Motor neuron (in vitro differentiated cells): ENCODE measurements at regions of chrX and their contacts with region 1.

Region 1: DNA sequence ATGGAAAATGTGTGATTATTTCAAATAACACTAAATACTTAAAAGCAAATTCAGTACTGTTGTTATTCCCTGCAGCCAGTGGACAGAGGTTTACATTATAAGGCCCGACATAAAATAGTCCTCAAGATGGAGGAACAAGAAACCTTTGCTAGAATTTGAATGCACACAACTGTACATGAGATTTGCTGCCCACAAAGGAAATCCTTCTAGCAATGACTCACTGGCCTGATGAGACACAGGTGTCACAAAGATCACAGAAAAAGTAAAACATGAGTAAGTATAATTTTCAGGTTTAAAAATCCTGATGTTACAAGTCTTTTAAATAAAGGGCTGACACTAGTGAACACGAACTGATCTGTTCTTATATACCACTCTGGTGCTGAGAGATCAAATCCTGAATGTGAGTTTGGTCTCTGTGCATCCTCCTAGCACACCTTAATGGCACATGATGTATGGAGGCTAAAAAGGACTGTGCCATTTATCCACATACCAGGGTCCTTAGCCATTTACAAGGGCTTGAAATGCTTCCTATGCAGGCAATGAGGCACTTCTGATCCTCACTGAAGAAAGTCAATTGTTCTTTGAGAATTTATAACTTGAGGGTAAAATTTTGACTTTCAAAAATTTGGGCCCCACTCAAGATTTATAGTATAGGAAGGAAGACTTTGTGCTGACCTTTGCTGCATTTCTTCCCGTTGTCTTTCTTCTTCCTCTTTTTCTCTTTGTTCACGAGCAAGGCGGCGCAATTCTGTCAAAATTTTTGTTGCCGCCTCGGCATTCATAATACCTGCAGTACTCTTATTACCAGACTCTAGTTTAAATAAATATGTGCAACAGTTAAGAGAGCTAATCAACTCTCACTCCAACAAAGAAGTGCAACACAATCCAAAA is 23.0 kb downstream of the MAP7D3 start:
- ATAC-seq: no peak
- H3K4me3 ChIP-seq: no peak overlapping the region
- H3K27ac ChIP-seq: no peak overlapping the region
- H3K4me1 ChIP-seq: no peaks in the 10 kb centered on the region

Region 2: DNA sequence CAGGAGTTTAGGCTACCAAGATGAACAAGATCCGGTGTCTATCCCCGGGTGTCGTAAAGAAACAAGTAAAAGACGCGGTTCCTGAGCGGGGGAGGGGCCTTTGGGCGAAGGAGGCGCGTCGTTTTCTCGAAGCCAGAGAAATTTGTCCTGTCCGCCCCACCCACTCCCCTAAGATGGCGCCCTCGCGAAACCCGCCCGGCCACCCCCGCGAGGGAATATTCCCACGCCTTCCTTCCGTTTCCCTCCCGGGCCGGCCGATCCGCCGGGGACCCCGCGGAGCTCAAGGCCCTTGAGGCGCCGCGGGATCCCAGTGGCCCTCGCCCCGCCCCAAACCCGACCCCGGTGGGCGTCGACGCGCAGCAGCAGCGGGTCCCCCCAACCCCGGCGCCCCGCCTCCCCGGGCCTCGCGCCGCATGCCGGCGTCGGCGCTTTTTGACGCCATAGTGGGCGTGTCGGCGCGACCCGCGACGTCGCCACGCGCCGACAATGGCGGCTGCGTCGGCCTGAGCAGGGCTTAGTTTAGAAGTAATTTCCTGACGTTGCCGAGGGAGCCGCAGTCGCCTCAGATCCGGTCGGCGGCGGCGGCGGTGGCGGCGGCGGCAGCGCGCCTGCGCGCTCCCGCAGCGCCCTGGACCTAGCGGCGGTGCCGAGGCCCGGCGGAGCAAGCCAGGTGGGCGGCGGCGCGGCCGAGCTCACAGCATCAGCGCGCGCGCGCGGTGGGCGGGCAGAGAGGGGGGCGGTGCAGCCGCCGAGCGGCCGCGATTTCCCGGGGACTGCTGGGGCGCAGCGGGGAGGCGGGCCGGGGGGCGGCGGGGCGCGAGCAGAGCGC is 268.8 kb after region 1 on chrX and contains the start of gene HTATSF1:
- in situ Hi-C with region 1: loop called in 1 of 9 experiments (anchors 25 kb)
- ATAC-seq: peak; percentile 78 to 90 (median 88)
- H3K4me3 ChIP-seq: peak within 1 kb of the TSS; percentile 52 to 83 (median 72)
- H3K27ac ChIP-seq: peak within 1 kb of the TSS; percentile 97 to 98
- H3K4me1 ChIP-seq: peaks cover 0 to 7% of the 10 kb centered on the region in 2 donors
- total RNA-seq, gene HTATSF1: 26.0 to 123 (median 60.9) TPM